Activated CD4-positive, alpha-beta T cell treated with anti-CD3 and anti-CD28 coated beads for 36 hours (primary cell): ENCODE measurements at regions of chr6 and their contacts with region 1.

Region 1: DNA sequence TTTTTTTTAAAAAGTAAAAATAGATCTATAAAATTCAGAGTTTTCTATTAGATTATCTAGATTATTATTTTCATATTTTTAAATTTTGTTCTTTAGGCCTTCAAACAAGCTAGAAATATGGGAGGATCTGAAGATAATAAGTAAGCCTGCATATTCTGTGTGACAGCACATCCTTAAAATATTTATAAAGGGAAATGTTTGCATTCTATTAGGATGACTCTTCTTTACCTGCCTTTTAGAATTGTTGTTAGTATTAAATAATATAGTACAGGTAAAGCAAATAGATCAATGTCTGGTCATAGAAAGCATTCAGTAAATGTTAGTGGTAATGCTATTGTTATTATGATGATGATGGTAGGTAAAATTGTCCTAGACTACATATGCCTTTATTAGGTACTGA is 17.4 kb downstream of the PEX3 start:
- DNase-seq: no peak
- ATAC-seq: no peak
- H3K4me3 Mint-ChIP-seq: no peak overlapping the region
- H3K27ac Mint-ChIP-seq: no peak overlapping the region
- H3K4me1 Mint-ChIP-seq: no peaks in the 10 kb centered on the region
- H3K27me3 Mint-ChIP-seq: no peaks in the 10 kb centered on the region

Region 2: DNA sequence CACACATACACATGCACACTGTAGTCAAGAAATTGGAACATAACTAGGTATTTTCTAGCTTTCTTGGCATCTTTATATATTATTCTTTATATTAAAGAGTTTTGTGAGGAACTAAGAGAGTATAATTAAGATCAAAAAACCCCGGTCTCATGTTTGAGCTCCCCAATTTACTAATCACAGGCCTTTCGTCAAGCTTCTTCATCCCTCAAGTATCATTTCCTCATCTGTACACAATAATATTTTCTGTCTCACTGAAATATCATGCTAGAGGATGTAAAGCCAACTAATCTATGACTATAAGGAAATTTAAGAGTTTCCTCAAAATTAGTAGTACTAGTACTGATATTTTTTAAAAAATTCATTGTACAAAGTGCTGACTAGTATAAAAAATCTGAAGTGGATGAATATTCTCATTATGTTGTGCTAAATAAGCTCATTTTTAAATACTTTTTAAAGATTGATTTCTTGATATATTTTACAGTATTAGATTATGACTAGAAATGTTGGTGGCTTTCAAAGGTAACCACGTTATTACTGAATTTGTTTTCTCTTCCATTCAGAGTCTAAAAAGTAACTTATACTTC is 10.5 kb after region 1 on chr6:
- CTCF ChIA-PET with region 1: no interaction called
- POLR2A ChIA-PET with region 1: no interaction called
- intact Hi-C with region 1: loop called in 1 of 2 experiments (anchors 1 kb)
- DNase-seq: no peak
- ATAC-seq: no peak
- H3K4me3 Mint-ChIP-seq: no peak overlapping the region
- H3K27ac Mint-ChIP-seq: no peak overlapping the region
- H3K4me1 Mint-ChIP-seq: no peaks in the 10 kb centered on the region
- H3K27me3 Mint-ChIP-seq: no peaks in the 10 kb centered on the region